ENCODE measurements at regions of chr10 and their contacts with region 1.

Region 1: GRCh38 chr10:75226656-75227055 is 9.1 kb downstream of the COMTD1 start:
- DNase-seq: no peak
- ATAC-seq: no peak
- H3K4me3 ChIP-seq: no peak overlapping the region
- H3K4me3 Mint-ChIP-seq: no peak overlapping the region
- H3K27ac ChIP-seq: peak overlapping the region in 1 of 2 donors; percentile 65
- H3K27ac Mint-ChIP-seq: peak overlapping the region; percentile 73
- H3K4me1 ChIP-seq: peaks cover 0 to 11% of the 10 kb centered on the region in 2 donors
- H3K4me1 Mint-ChIP-seq: peaks cover 39% of the 10 kb centered on the region
- H3K27me3 ChIP-seq: no peaks in the 10 kb centered on the region
- H3K27me3 Mint-ChIP-seq: no peaks in the 10 kb centered on the region
- CTCF ChIP-seq: no peak

Region 2: GRCh38 chr10:75210282-75211006 is 16.2 kb before region 1 on chr10 and contains the start of gene VDAC2:
- CTCF ChIA-PET with region 1: interaction called, 100 read pairs
- POLR2A ChIA-PET with region 1: interaction called, 7 read pairs
- intact Hi-C with region 1: loop called (anchors 1 kb)
- DNase-seq: peak; percentile 99
- ATAC-seq: peak; percentile 89
- H3K4me3 ChIP-seq: peak within 1 kb of the TSS; percentile 84 to 98 (median 93)
- H3K4me3 Mint-ChIP-seq: peak within 1 kb of the TSS; percentile 95
- H3K27ac ChIP-seq: peak within 1 kb of the TSS; percentile 97 to 100
- H3K27ac Mint-ChIP-seq: peak within 1 kb of the TSS; percentile 98
- H3K4me1 ChIP-seq: peaks cover 12 to 20% of the 10 kb centered on the region in 2 donors
- H3K4me1 Mint-ChIP-seq: peaks cover 24% of the 10 kb centered on the region
- H3K27me3 ChIP-seq: no peaks in the 10 kb centered on the region
- H3K27me3 Mint-ChIP-seq: no peaks in the 10 kb centered on the region
- CTCF ChIP-seq: no peak
- total RNA-seq, gene VDAC2: 83.6 and 86.4 TPM in 2 replicates

Region 3: DNA sequence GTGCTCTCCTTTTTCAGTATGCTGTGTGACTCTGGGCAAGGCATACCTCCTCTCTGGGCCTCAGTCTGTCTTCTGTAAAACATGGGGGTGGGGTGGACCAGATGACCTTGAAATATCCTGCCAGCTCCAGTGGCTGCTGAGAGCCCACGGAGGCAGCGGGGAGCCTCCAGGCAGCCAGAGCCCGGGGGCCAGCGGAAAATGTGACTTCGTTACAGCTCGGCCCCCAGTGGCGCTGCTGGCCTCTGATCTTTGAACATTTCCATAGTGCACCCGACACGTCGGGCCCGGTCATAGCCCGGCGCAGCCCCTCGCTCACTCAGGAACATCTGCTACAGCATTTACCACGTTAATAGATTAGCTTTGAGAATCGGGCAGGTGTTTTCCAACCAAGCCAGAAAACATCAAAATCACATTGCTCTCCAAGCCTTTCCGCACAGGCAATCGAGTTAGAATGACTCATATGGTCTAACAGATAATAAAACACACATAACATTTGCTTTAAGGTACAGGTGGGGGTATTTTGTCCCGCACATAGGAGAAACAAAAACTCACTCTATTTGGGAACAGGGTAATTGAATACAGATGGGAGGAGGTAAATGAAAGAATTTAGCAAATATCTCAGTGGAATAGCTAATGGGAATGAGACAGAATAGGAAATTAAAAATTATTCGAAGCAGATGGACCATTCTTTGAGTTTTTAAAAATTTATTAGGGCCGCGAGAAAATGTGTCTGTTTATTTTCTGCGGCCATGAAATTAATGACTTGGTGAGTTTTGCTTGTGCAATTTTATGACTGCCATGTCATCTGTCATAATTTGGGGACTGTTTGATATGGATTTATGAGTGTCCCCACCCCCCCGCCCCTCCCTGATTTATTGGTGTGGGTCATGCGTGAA is 35.4 kb after region 1 on chr10:
- CTCF ChIA-PET with region 1: no interaction called
- POLR2A ChIA-PET with region 1: no interaction called
- intact Hi-C with region 1: no loop called
- DNase-seq: no peak
- ATAC-seq: no peak
- H3K4me3 ChIP-seq: no peak overlapping the region
- H3K4me3 Mint-ChIP-seq: no peak overlapping the region
- H3K27ac ChIP-seq: no peak overlapping the region
- H3K27ac Mint-ChIP-seq: no peak overlapping the region
- H3K4me1 ChIP-seq: no peaks in the 10 kb centered on the region
- H3K4me1 Mint-ChIP-seq: no peaks in the 10 kb centered on the region
- H3K27me3 ChIP-seq: no peaks in the 10 kb centered on the region
- H3K27me3 Mint-ChIP-seq: peaks cover 3% of the 10 kb centered on the region
- CTCF ChIP-seq: no peak

Measured in B cell (primary cell).